T-cell (primary cell): ENCODE measurements at regions of chr3 and their contacts with region 1.

Region 1: DNA sequence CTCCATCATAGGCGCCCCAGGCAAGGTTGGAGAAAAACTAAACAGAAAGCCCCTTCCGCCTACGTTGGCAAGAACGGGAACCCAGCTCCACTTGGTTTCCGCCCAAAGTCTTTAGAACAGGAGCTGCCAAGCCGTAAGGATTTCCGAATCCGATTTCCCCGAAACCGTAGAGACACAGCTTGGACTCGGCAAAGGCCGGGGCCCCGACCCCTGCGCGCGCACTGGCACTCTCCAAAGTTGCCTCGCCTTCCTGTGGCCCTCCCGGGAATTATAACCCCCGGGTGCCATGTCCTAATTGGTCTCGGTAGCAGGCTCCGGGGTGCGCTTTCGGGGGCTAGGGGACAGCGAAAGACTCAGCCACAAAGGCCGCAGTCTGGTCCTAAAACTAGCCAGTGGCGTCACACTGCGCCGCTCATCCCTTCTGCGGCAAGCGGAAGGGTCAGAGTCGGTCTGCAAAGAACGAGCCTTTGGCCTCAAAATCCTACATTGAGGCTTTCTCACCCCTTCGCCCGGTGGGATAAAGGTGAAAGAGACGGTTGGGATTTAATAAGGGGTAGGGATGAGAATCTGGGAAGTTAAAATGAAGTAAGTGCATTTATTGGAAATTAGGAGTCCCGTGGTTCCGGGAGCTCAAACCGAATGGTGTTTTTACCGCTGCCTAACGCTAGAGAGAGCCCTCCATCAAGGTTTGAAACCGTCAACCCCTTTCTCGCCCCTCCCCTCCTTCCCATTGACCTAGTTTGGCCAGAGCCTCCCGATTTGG is 6.8 kb downstream of the BCL6 start:
- DNase-seq: peak in 32 of 35 experiments; percentile 25 to 85 (median 58)
- ATAC-seq: peak; percentile 41 to 53 (median 48)
- H3K4me3 ChIP-seq: peak overlapping the region; percentile 93 to 97
- H3K4me3 Mint-ChIP-seq: peak overlapping the region; percentile 95 to 98 (median 98)
- H3K27ac ChIP-seq: peak overlapping the region; percentile 98
- H3K27ac Mint-ChIP-seq: peak overlapping the region; percentile 90 to 100
- H3K4me1 ChIP-seq: peaks cover 17 to 60% of the 10 kb centered on the region in 2 experiments
- H3K4me1 Mint-ChIP-seq: peaks cover 51 to 62% (median 53%) of the 10 kb centered on the region in 3 donors
- H3K27me3 ChIP-seq: no peaks in the 10 kb centered on the region
- H3K27me3 Mint-ChIP-seq: no peaks in the 10 kb centered on the region

Region 2: GRCh38 chr3:186617038-186617946 is 1121.2 kb before region 1 on chr3:
- CTCF ChIA-PET with region 1: interaction called in 1 of 2 experiments, 16 read pairs
- POLR2A ChIA-PET with region 1: no interaction called
- DNase-seq: peak; percentile 66 to 96 (median 86)
- ATAC-seq: peak; percentile 96 to 99 (median 98)
- H3K4me3 ChIP-seq: no peak overlapping the region
- H3K4me3 Mint-ChIP-seq: peak overlapping the region; percentile 51 to 68 (median 59)
- H3K27ac ChIP-seq: no peak overlapping the region
- H3K27ac Mint-ChIP-seq: peak overlapping the region; percentile 53 to 74
- H3K4me1 ChIP-seq: peaks cover 7 to 18% of the 10 kb centered on the region in 2 experiments
- H3K4me1 Mint-ChIP-seq: peaks cover 20 to 22% (median 21%) of the 10 kb centered on the region in 3 donors
- H3K27me3 ChIP-seq: peaks cover 4 to 34% of the 10 kb centered on the region in 2 experiments
- H3K27me3 Mint-ChIP-seq: peaks cover 24 to 34% of the 10 kb centered on the region in 2 donors

Region 3: GRCh38 chr3:187694801-187695200 is 43.7 kb before region 1 on chr3:
- CTCF ChIA-PET with region 1: no interaction called
- POLR2A ChIA-PET with region 1: no interaction called
- DNase-seq: no peak
- ATAC-seq: no peak
- H3K4me3 ChIP-seq: no peak overlapping the region
- H3K4me3 Mint-ChIP-seq: no peak overlapping the region
- H3K27ac ChIP-seq: no peak overlapping the region
- H3K27ac Mint-ChIP-seq: no peak overlapping the region
- H3K4me1 ChIP-seq: no peaks in the 10 kb centered on the region
- H3K4me1 Mint-ChIP-seq: no peaks in the 10 kb centered on the region
- H3K27me3 ChIP-seq: peaks cover 0 to 20% of the 10 kb centered on the region in 2 experiments
- H3K27me3 Mint-ChIP-seq: peaks cover 37 to 40% of the 10 kb centered on the region in 2 donors

Region 4: GRCh38 chr3:188049606-188050530 is 311.4 kb after region 1 on chr3:
- CTCF ChIA-PET with region 1: no interaction called
- POLR2A ChIA-PET with region 1: interaction called in 1 of 2 experiments, 11 read pairs
- DNase-seq: peak in 31 of 35 experiments; percentile 5 to 57 (median 25)
- ATAC-seq: peak; percentile 81 to 93 (median 88)
- H3K4me3 ChIP-seq: no peak overlapping the region
- H3K4me3 Mint-ChIP-seq: peak overlapping the region; percentile 6 to 37 (median 13)
- H3K27ac ChIP-seq: peak overlapping the region; percentile 14
- H3K27ac Mint-ChIP-seq: peak overlapping the region; percentile 50 to 59
- H3K4me1 ChIP-seq: peaks cover 13 to 14% of the 10 kb centered on the region in 2 experiments
- H3K4me1 Mint-ChIP-seq: peaks cover 18 to 23% (median 21%) of the 10 kb centered on the region in 3 donors
- H3K27me3 ChIP-seq: no peaks in the 10 kb centered on the region
- H3K27me3 Mint-ChIP-seq: no peaks in the 10 kb centered on the region

Region 5: DNA sequence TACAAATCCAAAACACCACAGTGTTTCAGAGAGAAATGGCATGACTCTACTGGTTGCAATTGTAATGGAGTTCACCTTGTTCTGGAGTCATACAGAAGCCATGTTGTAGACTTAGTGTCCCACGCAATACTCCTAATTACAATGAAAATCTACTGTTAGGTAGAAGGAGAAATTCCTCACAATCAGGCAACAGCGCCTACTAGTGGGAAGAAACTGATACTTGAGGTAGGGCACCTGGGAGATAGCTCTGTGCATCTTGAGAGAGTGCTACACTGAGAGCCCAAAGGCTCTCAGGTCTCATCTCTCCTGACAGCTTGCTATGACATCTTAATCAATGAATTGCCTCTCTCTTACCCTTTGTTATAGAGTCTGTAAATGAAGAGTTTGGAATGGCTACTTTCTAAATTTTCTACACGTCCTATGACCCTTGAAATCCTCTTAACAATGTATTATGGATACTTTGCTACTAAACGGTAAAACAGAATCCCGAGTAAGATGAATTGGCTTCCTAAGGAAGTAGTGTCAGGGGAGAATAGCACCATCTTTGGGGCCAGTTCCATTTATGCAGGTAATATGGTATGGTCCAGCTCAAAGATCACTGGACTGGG is 1010.6 kb after region 1 on chr3:
- CTCF ChIA-PET with region 1: interaction called, 13 to 111 read pairs
- POLR2A ChIA-PET with region 1: interaction called in 1 of 2 experiments, 3 read pairs
- DNase-seq: peak in 33 of 35 experiments; percentile 8 to 81 (median 42)
- ATAC-seq: peak; percentile 73 to 76 (median 74)
- H3K4me3 ChIP-seq: no peak overlapping the region
- H3K4me3 Mint-ChIP-seq: no peak overlapping the region
- H3K27ac ChIP-seq: no peak overlapping the region
- H3K27ac Mint-ChIP-seq: no peak overlapping the region
- H3K4me1 ChIP-seq: no peaks in the 10 kb centered on the region
- H3K4me1 Mint-ChIP-seq: peaks cover 0 to 10% (median 0%) of the 10 kb centered on the region in 3 donors
- H3K27me3 ChIP-seq: no peaks in the 10 kb centered on the region
- H3K27me3 Mint-ChIP-seq: no peaks in the 10 kb centered on the region

Region 6: DNA sequence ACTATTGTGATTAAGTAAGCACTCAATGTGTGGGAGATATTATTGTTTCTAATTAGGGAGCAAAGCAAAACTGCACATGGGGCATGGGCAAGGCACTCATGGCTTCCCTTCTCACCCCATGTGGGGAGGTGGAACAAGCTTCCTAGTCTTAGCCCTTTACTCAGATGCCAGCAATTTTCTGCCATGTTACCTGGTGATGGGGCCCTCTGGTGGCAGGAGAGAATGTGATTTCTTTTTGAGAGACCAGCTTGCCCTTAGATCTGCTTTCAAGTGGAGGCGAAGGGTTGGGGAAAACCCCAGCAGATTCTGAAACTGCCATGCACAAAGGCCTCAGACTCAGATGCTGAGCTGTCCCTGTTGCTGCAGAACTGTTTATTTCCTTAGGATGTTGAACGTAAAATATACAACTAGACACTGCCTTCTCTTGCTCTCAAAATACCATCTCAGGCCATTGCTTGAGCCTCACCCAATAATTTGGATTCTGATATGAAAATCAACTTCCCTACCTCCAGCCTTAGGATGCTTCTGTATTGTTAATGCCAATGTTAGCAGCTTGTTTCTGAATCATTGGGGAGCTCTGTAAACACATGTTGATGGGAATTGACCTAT is 1303.1 kb after region 1 on chr3:
- CTCF ChIA-PET with region 1: interaction called, 29 to 135 read pairs
- POLR2A ChIA-PET with region 1: interaction called, 4 to 10 read pairs
- DNase-seq: peak; percentile 44 to 86 (median 66)
- ATAC-seq: peak; percentile 98 to 100 (median 100)
- H3K4me3 ChIP-seq: no peak overlapping the region
- H3K4me3 Mint-ChIP-seq: no peak overlapping the region
- H3K27ac ChIP-seq: peak overlapping the region; percentile 55
- H3K27ac Mint-ChIP-seq: peak overlapping the region; percentile 79 to 83
- H3K4me1 ChIP-seq: peaks cover 2 to 5% of the 10 kb centered on the region in 2 experiments
- H3K4me1 Mint-ChIP-seq: peaks cover 9 to 14% (median 13%) of the 10 kb centered on the region in 3 donors
- H3K27me3 ChIP-seq: no peaks in the 10 kb centered on the region
- H3K27me3 Mint-ChIP-seq: no peaks in the 10 kb centered on the region

Region 7: DNA sequence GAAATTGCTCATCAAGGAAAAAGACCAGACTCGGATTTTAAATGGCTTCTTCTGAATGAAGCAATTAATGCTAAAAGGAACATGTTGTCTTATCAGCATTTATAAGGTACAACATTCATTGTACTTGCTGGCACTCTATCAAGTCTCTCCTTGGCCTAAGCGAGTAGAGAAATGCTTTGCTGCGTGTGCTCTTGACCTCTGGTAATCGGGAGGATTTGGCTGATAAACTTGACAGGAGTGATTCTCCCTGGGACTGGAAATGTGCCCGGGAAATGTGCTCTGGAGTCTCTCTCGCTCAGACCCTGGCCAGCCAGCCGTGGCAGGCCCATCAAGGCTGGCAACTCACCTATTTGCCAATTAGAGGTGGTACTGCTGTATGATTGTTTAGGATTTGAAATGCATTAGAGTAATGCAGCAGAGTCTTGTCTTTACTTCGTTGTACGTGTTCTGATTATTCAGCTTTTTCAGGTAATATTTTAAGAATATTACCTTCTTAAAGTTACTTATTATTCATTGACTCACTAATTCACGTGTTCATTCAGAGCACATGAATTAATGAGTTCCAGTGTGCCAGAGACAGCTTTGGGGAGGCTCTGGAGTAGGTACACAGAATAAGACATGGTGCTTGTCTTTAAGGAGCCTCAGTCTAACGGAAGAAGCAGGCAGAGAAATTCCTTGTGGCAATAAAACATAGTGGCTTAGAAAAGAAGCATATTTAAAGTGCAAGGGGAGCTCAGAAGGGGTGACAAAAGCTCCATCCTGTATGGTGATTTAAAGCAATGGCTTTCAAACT is 1385.3 kb after region 1 on chr3:
- CTCF ChIA-PET with region 1: interaction called, 3 to 14 read pairs
- POLR2A ChIA-PET with region 1: interaction called in 1 of 2 experiments, 4 read pairs
- DNase-seq: no peak
- ATAC-seq: no peak
- H3K4me3 ChIP-seq: peak overlapping the region in 1 of 2 donors; percentile 31
- H3K4me3 Mint-ChIP-seq: peak overlapping the region in 2 of 3 donors; percentile 74 to 81
- H3K27ac ChIP-seq: no peak overlapping the region
- H3K27ac Mint-ChIP-seq: peak overlapping the region; percentile 24 to 90
- H3K4me1 ChIP-seq: peaks cover 0 to 5% of the 10 kb centered on the region in 2 experiments
- H3K4me1 Mint-ChIP-seq: peaks cover 0 to 49% (median 31%) of the 10 kb centered on the region in 3 donors
- H3K27me3 ChIP-seq: no peaks in the 10 kb centered on the region
- H3K27me3 Mint-ChIP-seq: no peaks in the 10 kb centered on the region

Region 8: GRCh38 chr3:189148081-189148507 is 1409.6 kb after region 1 on chr3:
- CTCF ChIA-PET with region 1: interaction called, 16 to 81 read pairs
- POLR2A ChIA-PET with region 1: interaction called in 1 of 2 experiments, 6 read pairs
- DNase-seq: peak; percentile 19 to 84 (median 60)
- ATAC-seq: peak; percentile 55 to 75 (median 62)
- H3K4me3 ChIP-seq: no peak overlapping the region
- H3K4me3 Mint-ChIP-seq: no peak overlapping the region
- H3K27ac ChIP-seq: no peak overlapping the region
- H3K27ac Mint-ChIP-seq: peak overlapping the region in 1 of 2 donors; percentile 21
- H3K4me1 ChIP-seq: peaks cover 3 to 6% of the 10 kb centered on the region in 2 experiments
- H3K4me1 Mint-ChIP-seq: peaks cover 12 to 25% (median 22%) of the 10 kb centered on the region in 3 donors
- H3K27me3 ChIP-seq: no peaks in the 10 kb centered on the region
- H3K27me3 Mint-ChIP-seq: no peaks in the 10 kb centered on the region